ENCODE measurements at regions of chr2 and their contacts with region 1.

Region 1: DNA sequence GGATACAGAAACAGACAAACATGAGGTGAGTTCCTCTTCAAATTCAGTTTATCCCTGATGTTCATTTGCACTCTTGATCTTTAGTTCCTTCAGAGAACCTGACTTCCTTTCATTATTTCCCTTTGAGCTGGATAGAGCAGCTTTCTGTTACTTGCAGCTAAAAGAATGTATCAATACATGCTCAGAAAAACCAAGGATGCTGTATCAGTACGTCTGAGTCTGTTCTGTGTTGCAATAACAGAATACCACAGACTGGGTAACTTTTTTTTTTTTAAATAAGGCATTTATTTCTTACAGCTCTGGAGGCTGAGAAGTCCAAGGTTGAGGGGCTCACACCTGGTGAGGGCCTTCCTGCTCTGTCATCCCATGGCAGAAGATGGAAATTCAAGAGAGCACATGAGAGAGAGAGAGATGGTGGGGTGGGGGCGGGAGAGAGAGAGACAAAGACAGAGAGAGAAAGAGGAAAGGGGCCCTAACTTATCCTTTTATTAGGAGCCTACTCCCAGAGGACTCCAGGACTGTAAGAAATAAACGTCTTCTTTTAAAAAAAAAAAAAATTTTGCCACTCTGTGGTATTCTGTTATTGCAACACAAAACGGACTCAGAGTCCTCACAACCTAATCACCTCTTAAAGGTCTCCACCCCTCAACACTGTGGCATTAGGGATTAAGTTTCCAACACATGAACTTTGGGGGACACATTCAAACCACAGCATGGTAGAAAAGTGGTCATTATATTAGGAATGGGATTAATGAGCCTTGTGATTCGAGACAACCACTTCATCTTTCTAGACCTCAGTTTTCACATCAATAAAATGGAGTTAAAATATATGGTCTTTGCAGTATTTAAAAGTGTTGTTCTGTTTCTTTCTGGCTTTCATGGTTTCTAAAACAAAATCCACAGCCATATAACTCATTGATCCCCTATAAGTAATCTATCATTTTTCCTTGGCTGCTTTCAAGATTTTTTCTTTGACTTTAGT is 18.4 kb upstream of the SELENOI start:
- DNase-seq: no peak
- H3K4me3 ChIP-seq: no peak overlapping the region
- H3K27ac ChIP-seq: no peak overlapping the region
- H3K4me1 ChIP-seq: no peaks in the 10 kb centered on the region
- H3K27me3 ChIP-seq: no peaks in the 10 kb centered on the region
- CTCF ChIP-seq: no peak

Region 2: GRCh38 chr2:26235085-26235484 is 92.5 kb before region 1 on chr2:
- intact Hi-C with region 1: loop called (anchors 10 kb)
- DNase-seq: no peak
- H3K4me3 ChIP-seq: no peak overlapping the region
- H3K27ac ChIP-seq: no peak overlapping the region
- H3K4me1 ChIP-seq: peaks cover 30% of the 10 kb centered on the region
- H3K27me3 ChIP-seq: no peaks in the 10 kb centered on the region
- CTCF ChIP-seq: peak; percentile 44

Measured in left ventricle myocardium inferior (tissue), 1 donor.